Sciatic nerve (tissue), 2 donors: ENCODE measurements at regions of chr12 and their contacts with region 1.

Region 1: DNA sequence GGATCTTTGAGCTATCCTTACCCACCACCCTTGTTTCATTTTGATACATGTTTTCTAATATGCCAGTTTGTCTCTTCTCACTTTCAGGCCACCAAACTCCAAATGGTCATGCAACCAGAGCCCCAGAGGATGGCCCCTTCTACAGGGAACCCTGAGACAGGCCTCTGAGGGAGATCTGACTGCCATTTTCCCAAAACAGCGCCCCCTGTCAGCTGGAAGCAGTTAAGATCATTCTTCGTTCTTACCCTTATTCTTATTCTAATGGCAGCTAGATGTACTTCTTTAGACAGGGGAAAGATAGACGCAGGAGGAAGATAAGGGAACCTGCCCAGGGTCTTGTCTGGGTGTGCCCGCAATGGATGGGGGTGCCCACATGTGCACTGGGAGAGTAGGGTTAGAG is 38.4 kb downstream of the C12orf56 start:
- DNase-seq: no peak
- ATAC-seq: no peak

Region 2: GRCh38 chr12:62631471-62632410 is 1720.4 kb before region 1 on chr12:
- intact Hi-C with region 1: no loop called
- DNase-seq: peak; percentile 82
- ATAC-seq: peak; percentile 88

Region 3: GRCh38 chr12:64389154-64389553 is 37.0 kb after region 1 on chr12:
- intact Hi-C with region 1: loop called (anchors 1 kb)
- DNase-seq: no peak
- ATAC-seq: no peak